Heart left ventricle (tissue), 16 donors: ENCODE measurements at regions of chr3 and their contacts with region 1.

Region 1: GRCh38 chr3:116517308-116517707 is 72.0 kb upstream of the LSAMP start:
- DNase-seq: no peak
- ATAC-seq: no peak
- H3K4me3 ChIP-seq: no peak overlapping the region
- H3K27ac ChIP-seq: no peak overlapping the region
- H3K4me1 ChIP-seq: no peaks in the 10 kb centered on the region
- H3K27me3 ChIP-seq: no peaks in the 10 kb centered on the region
- CTCF ChIP-seq: peak in 2 of 12 donors; percentile 12 to 14
- POLR2A ChIP-seq: no peak

Region 2: DNA sequence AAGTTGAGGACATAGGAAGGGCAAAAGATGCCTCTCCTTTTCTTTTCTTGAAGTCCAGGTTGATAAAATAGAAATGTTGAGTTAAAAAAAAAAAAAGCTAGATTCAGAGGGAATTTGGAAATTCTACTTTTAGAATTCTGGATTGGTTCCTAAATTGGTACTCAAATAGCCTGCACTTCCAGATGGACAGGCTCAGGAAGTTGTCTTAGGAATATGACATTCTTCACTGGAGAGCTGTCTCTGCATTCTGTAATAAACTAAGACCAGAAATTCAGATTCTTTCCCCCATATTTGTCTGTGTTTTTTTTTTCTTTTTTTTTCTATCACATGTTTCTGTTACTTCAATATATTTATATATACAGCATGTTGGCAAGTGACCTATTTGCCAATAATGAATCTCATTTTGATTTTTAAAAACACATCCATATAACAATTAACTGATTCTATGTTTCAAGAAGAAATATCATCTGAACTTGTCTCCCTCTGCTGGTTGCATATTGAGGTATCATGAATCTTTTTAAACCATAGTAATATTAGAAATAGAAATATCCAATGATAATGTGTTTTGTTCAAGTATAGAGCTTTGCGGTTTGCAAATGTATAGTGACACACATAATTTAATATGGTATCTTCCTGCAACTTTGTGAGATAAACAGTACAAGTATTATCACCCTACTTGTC is 63.5 kb before region 1 on chr3:
- intact Hi-C with region 1: no loop called
- DNase-seq: no peak
- ATAC-seq: no peak
- H3K4me3 ChIP-seq: no peak overlapping the region
- H3K27ac ChIP-seq: no peak overlapping the region
- H3K4me1 ChIP-seq: no peaks in the 10 kb centered on the region
- H3K27me3 ChIP-seq: peaks cover 0 to 5% (median 0%) of the 10 kb centered on the region in 9 donors
- CTCF ChIP-seq: peak in 4 of 12 donors; percentile 26 to 31 (median 28)
- POLR2A ChIP-seq: no peak

Region 3: DNA sequence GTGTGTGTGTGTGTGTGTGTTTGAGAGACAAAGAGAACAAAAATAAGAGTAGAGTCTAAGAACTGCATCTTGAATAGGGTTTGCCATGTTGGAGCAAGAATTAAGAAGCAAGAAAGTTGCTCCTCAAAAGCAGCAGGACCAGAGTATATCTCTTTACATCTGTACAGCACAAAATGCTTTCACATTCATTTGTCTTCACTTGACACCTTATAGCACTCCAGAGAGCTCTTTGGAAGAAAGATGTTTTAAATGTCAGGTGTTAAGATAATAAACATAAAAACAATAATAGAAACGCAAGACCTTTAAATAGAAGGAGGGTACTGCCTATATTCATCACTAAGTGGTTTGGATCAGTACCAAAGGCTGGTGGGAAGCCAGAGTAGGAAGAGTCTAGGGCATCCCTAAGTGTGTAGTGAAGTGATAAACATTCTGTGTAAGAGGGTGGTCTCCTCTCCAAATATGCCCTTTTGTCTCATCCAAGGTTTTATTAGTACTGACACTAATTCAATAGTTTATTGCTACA is 53.0 kb before region 1 on chr3:
- intact Hi-C with region 1: loop called in 1 of 10 experiments (anchors 10 kb)
- DNase-seq: no peak
- ATAC-seq: no peak
- H3K4me3 ChIP-seq: no peak overlapping the region
- H3K27ac ChIP-seq: no peak overlapping the region
- H3K4me1 ChIP-seq: no peaks in the 10 kb centered on the region
- H3K27me3 ChIP-seq: no peaks in the 10 kb centered on the region
- CTCF ChIP-seq: no peak
- POLR2A ChIP-seq: no peak

Region 4: GRCh38 chr3:116886202-116886893 is 369.0 kb after region 1 on chr3:
- intact Hi-C with region 1: no loop called
- DNase-seq: no peak
- ATAC-seq: no peak
- H3K4me3 ChIP-seq: no peak overlapping the region
- H3K27ac ChIP-seq: no peak overlapping the region
- H3K4me1 ChIP-seq: no peaks in the 10 kb centered on the region
- H3K27me3 ChIP-seq: no peaks in the 10 kb centered on the region
- CTCF ChIP-seq: no peak
- POLR2A ChIP-seq: no peak